Left ventricle myocardium inferior (tissue), 1 donor: ENCODE measurements at regions of chr3 and their contacts with region 1.

Region 1: GRCh38 chr3:83321891-83322290 is 1560.4 kb upstream of the GBE1 start:
- DNase-seq: no peak
- H3K4me3 ChIP-seq: no peak overlapping the region
- H3K27ac ChIP-seq: no peak overlapping the region
- H3K4me1 ChIP-seq: no peaks in the 10 kb centered on the region
- H3K27me3 ChIP-seq: no peaks in the 10 kb centered on the region
- CTCF ChIP-seq: no peak

Region 2: GRCh38 chr3:83393276-83393675 is 71.4 kb after region 1 on chr3:
- intact Hi-C with region 1: no loop called
- DNase-seq: no peak
- H3K4me3 ChIP-seq: no peak overlapping the region
- H3K27ac ChIP-seq: no peak overlapping the region
- H3K4me1 ChIP-seq: no peaks in the 10 kb centered on the region
- H3K27me3 ChIP-seq: no peaks in the 10 kb centered on the region
- CTCF ChIP-seq: no peak

Region 3: GRCh38 chr3:83821506-83821905 is 499.6 kb after region 1 on chr3:
- intact Hi-C with region 1: loop called (anchors 10 kb)
- DNase-seq: no peak
- H3K4me3 ChIP-seq: no peak overlapping the region
- H3K27ac ChIP-seq: no peak overlapping the region
- H3K4me1 ChIP-seq: no peaks in the 10 kb centered on the region
- H3K27me3 ChIP-seq: no peaks in the 10 kb centered on the region
- CTCF ChIP-seq: no peak